ENCODE measurements at regions of chr3 and their contacts with region 1.

Region 1: DNA sequence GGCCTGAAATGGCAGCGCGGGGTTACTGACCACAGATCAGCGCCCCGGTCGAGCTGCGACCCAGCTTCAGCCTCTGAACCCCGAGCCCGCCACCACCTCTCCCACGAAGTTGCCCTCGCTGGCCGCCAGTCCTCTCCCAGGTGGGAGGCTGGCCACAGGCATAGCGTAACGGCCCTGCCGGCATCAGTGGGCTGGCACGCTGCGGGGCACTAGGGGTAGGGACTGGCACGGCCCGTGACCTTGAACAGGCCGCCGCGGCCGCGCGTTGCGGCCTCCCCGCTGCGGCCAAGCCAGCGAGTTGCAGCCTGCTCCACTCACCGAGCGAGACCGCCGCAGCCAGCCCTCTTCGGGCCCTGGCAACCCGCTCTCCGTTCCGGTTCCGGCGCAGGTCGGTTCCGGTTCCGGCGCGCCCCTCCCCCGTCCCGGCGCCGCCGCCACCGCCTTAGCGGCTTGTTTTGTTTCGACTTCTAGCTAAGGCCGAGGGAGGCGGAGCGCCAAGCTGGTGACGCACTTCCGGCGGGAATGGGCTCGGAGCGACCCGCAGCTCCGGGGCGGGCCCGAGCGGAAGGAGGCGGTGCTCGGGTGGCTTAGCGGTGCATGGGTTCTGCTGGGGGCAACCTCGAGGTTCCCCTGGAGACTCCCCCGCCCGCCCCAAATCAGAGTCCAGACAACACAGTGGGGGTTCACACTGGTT is at the start of gene USP19:
- DNase-seq: peak; percentile 89
- ATAC-seq: peak; percentile 93
- H3K4me3 ChIP-seq: peak within 1 kb of the TSS; percentile 76 to 100 (median 95)
- H3K27ac ChIP-seq: peak within 1 kb of the TSS; percentile 84
- H3K4me1 ChIP-seq: peaks cover 19% of the 10 kb centered on the region
- H3K27me3 ChIP-seq: no peaks in the 10 kb centered on the region; a peak in 1 of 5 replicates
- CTCF ChIP-seq: peak; percentile 12; the same call in 1 of the 2 replicates
- EP300 ChIP-seq: 0 out of 4 replicates have a peak, but pooled peaks of 1 of the 2 experiments have one; percentile 11
- POLR2A ChIP-seq: peak in 1 of 2 experiments; percentile 88; a peak in 2 of 4 replicates
- RAD21 ChIP-seq: peak; percentile 68
- total RNA-seq, gene USP19: 31.7 and 33.8 TPM in 2 replicates

Region 2: GRCh38 chr3:48607519-48607918 is 513.1 kb before region 1 on chr3:
- CTCF ChIA-PET with region 1: no interaction called
- POLR2A ChIA-PET with region 1: no interaction called
- in situ Hi-C with region 1: no loop called
- intact Hi-C with region 1: no loop called
- DNase-seq: no peak
- ATAC-seq: no peak
- H3K4me3 ChIP-seq: peak overlapping the region in 1 of 3 experiments; percentile 96; a peak in 1 of 6 replicates
- H3K27ac ChIP-seq: no peak overlapping the region
- H3K4me1 ChIP-seq: peaks cover 51% of the 10 kb centered on the region
- H3K27me3 ChIP-seq: no peaks in the 10 kb centered on the region; a peak in 1 of 5 replicates
- CTCF ChIP-seq: no peak
- EP300 ChIP-seq: no peak
- POLR2A ChIP-seq: no peak
- RAD21 ChIP-seq: no peak

Region 3: DNA sequence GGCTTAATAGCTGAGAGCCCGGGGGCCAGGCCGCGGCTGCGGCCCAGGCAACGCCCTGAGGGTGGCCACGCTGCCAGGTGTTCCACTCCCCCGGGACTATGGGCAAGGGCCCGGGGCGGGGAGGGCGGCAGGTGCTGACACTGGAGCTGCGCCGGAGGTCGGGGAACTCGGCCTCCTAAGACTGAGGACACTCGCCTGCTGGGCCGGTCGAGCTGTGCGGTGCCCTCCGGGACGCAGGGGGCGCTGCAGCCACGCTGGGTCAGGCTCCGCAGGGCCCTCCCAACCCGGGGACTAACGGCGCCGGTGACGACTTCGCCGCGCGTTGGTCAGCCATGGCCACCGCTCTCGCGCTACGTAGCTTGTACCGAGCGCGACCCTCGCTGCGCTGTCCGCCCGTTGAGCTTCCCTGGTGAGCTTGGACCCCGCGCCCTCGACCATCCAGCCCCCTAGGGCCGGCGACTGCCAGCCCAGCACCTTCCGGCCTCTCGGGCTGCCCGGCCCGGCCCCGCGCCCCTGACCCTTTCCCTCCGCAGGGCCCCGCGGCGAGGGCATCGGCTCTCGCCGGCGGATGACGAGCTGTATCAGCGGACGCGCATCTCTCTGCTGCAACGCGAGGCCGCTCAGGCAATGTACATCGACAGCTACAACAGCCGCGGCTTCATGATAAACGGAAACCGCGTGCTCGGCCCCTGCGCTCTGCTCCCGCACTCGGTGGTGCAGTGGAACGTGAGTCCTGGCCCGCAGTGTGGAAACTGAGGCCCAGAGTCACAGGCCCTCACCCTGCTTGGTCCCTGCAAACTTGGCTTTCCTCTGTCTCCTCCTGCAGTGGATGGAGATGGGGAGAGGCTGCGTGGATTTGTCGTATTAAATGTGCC is 98.5 kb before region 1 on chr3 and contains the start of gene NDUFAF3:
- CTCF ChIA-PET with region 1: no interaction called
- POLR2A ChIA-PET with region 1: interaction called, 12 read pairs
- in situ Hi-C with region 1: no loop called
- intact Hi-C with region 1: no loop called
- DNase-seq: peak; percentile 85
- ATAC-seq: peak; percentile 72
- H3K4me3 ChIP-seq: peak within 1 kb of the TSS; percentile 80 to 96 (median 89)
- H3K27ac ChIP-seq: peak within 1 kb of the TSS; percentile 99
- H3K4me1 ChIP-seq: peaks cover 50% of the 10 kb centered on the region
- H3K27me3 ChIP-seq: no peaks in the 10 kb centered on the region; a peak in 1 of 5 replicates
- CTCF ChIP-seq: peak; percentile 97
- EP300 ChIP-seq: peak in 1 of 2 experiments; percentile 8; a peak in 1 of 4 replicates
- POLR2A ChIP-seq: peak in 1 of 2 experiments; percentile 95; a peak in 2 of 4 replicates
- RAD21 ChIP-seq: peak; percentile 57
- total RNA-seq, gene NDUFAF3: 50.0 and 51.9 TPM in 2 replicates

Region 4: GRCh38 chr3:49028673-49029562 is 91.7 kb before region 1 on chr3 and contains the start of gene IMPDH2:
- CTCF ChIA-PET with region 1: no interaction called
- POLR2A ChIA-PET with region 1: interaction called, 12 read pairs
- in situ Hi-C with region 1: no loop called
- intact Hi-C with region 1: no loop called
- DNase-seq: peak; percentile 82
- ATAC-seq: peak; percentile 86
- H3K4me3 ChIP-seq: peak within 1 kb of the TSS; percentile 56 to 78 (median 73)
- H3K27ac ChIP-seq: peak within 1 kb of the TSS; percentile 63
- H3K4me1 ChIP-seq: peaks cover 43% of the 10 kb centered on the region
- H3K27me3 ChIP-seq: no peaks in the 10 kb centered on the region
- CTCF ChIP-seq: peak; percentile 71
- EP300 ChIP-seq: peak in 1 of 2 experiments; percentile 42; a peak in 1 of 4 replicates
- POLR2A ChIP-seq: peak in 1 of 2 experiments; percentile 99; a peak in 2 of 4 replicates
- RAD21 ChIP-seq: peak; percentile 72
- total RNA-seq, gene IMPDH2: 260 and 344 TPM in 2 replicates

Region 5: GRCh38 chr3:49053543-49053942 is 67.0 kb before region 1 on chr3:
- CTCF ChIA-PET with region 1: no interaction called
- POLR2A ChIA-PET with region 1: no interaction called
- in situ Hi-C with region 1: no loop called
- intact Hi-C with region 1: no loop called
- DNase-seq: no peak
- ATAC-seq: no peak
- H3K4me3 ChIP-seq: no peak overlapping the region
- H3K27ac ChIP-seq: no peak overlapping the region
- H3K4me1 ChIP-seq: peaks cover 27% of the 10 kb centered on the region
- H3K27me3 ChIP-seq: no peaks in the 10 kb centered on the region
- CTCF ChIP-seq: no peak
- EP300 ChIP-seq: no peak
- POLR2A ChIP-seq: no peak
- RAD21 ChIP-seq: no peak

Region 6: GRCh38 chr3:49104483-49105291 is 15.9 kb before region 1 on chr3 and contains the start of gene QARS1:
- CTCF ChIA-PET with region 1: no interaction called
- POLR2A ChIA-PET with region 1: interaction called, 32 read pairs
- in situ Hi-C with region 1: no loop called
- intact Hi-C with region 1: loop called (anchors 2 kb)
- DNase-seq: peak; percentile 94
- ATAC-seq: peak; percentile 93
- H3K4me3 ChIP-seq: peak within 1 kb of the TSS; percentile 89 to 94 (median 93)
- H3K27ac ChIP-seq: peak within 1 kb of the TSS; percentile 93
- H3K4me1 ChIP-seq: peaks cover 24% of the 10 kb centered on the region
- H3K27me3 ChIP-seq: no peaks in the 10 kb centered on the region
- CTCF ChIP-seq: no peak
- EP300 ChIP-seq: no peak; a peak in 1 of 4 replicates
- POLR2A ChIP-seq: peak; percentile 80 to 84
- RAD21 ChIP-seq: no peak; the same call in 1 of the 2 replicates
- total RNA-seq, gene QARS1: 307 and 408 TPM in 2 replicates

Region 7: DNA sequence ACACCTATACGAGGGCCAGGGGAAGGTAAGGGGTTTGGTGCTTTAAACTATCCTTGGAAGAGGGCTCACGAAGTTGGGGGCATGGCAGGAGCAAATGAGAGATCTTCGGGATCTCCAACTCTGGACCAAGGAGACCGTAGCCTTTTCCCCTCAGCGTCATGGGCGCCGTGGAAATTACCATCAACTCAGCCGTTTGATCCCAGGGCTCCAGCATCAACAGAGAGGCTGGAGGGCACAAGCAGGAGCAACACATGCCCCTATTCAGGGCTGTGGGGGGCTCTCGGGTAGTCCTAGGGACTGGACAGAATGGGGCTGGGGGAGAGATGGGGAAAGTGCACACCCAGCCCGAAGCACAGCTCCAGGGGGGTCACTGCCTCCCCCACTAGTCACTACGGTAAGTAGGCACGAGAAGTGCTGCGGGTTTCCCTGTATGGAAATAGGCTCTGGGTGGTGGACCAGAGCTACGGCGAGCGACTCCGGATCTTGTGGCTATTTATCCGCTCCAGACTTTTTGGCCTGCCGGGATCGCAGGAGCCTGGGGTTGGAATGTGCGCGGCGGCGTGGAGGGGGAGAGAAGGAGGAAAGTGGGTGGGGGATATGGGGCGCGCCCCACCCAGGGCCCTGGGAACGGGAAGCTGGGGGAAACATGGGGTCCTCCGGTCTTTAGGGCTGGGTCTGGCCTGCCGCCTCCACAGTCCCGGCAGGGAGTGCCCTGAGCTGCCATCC is 12.8 kb after region 1 on chr3:
- CTCF ChIA-PET with region 1: no interaction called
- POLR2A ChIA-PET with region 1: interaction called, 110 read pairs
- in situ Hi-C with region 1: no loop called
- intact Hi-C with region 1: no loop called
- DNase-seq: peak; percentile 80
- ATAC-seq: peak; percentile 60
- H3K4me3 ChIP-seq: peak overlapping the region; percentile 72 to 78 (median 77)
- H3K27ac ChIP-seq: peak overlapping the region; percentile 80
- H3K4me1 ChIP-seq: peaks cover 39% of the 10 kb centered on the region
- H3K27me3 ChIP-seq: no peaks in the 10 kb centered on the region
- CTCF ChIP-seq: peak; percentile 35
- EP300 ChIP-seq: no peak
- POLR2A ChIP-seq: peak in 1 of 2 experiments; percentile 31; a peak in 1 of 4 replicates
- RAD21 ChIP-seq: 0 out of 2 replicates have a peak, but pooled peaks have one; percentile 18

Measured in HepG2 (cell line).